T-cell (primary cell): ENCODE measurements at regions of chr5 and their contacts with region 1.

Region 1: GRCh38 chr5:32232441-32233219 is 58.5 kb upstream of the GOLPH3 start:
- DNase-seq: peak; percentile 40 to 85 (median 71)
- ATAC-seq: peak; percentile 74 to 88 (median 84)
- H3K4me3 ChIP-seq: no peak overlapping the region
- H3K4me3 Mint-ChIP-seq: no peak overlapping the region
- H3K27ac ChIP-seq: peak overlapping the region; percentile 25
- H3K27ac Mint-ChIP-seq: peak overlapping the region in 1 of 2 donors; percentile 41
- H3K4me1 ChIP-seq: peaks cover 0 to 8% of the 10 kb centered on the region in 2 experiments
- H3K4me1 Mint-ChIP-seq: peaks cover 4 to 7% (median 5%) of the 10 kb centered on the region in 3 donors
- H3K27me3 ChIP-seq: no peaks in the 10 kb centered on the region
- H3K27me3 Mint-ChIP-seq: no peaks in the 10 kb centered on the region

Region 2: DNA sequence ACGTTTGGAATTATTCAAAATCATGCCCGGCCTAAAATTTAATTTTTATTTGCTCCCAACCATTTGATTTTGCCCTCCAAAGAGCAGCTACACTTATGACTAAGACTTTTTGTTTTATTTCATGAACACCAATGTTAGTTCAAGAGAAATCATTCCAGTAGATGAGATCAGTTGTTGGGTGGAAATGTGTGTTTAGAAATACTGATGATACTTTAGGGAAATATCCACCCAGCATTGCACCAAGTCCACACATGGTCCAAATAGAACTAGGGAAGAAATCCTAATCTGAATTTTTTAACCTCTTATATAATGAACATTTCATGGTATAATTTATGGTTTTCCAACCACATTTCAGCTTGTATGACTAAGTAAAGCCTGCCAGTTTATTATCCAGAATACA is 30.2 kb before region 1 on chr5:
- CTCF ChIA-PET with region 1: no interaction called
- POLR2A ChIA-PET with region 1: no interaction called
- DNase-seq: no peak
- ATAC-seq: no peak
- H3K4me3 ChIP-seq: no peak overlapping the region
- H3K4me3 Mint-ChIP-seq: no peak overlapping the region
- H3K27ac ChIP-seq: no peak overlapping the region
- H3K27ac Mint-ChIP-seq: no peak overlapping the region
- H3K4me1 ChIP-seq: no peaks in the 10 kb centered on the region
- H3K4me1 Mint-ChIP-seq: no peaks in the 10 kb centered on the region
- H3K27me3 ChIP-seq: peaks cover 0 to 4% of the 10 kb centered on the region in 2 experiments
- H3K27me3 Mint-ChIP-seq: peaks cover 0 to 22% of the 10 kb centered on the region in 2 donors

Region 3: DNA sequence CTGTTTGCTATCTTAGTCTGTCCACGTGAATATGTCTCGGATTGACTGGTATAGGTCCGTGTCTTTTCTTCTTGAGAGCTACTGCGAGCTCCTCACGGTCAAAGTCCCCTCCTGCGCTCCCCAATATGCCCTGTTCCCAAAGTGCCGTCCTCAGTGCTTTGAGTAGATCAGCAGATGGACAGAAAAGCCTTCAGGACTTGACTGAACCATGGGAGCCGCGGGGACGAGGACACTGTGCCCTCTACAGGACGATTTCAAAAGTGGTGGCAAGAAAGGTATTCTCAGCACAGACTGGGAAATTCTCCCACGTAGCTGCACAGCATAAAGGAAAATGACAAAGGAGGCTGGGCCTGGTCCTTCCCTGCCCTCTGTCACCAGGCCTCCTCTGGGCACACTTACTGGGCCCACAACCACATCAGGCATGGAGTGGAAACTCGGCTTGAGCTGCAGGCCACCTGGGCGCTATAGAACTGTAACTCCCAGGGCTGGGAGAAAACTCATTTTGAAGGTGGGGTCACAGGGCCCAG is 96.7 kb after region 1 on chr5:
- CTCF ChIA-PET with region 1: interaction called, 48 to 66 read pairs
- POLR2A ChIA-PET with region 1: no interaction called
- DNase-seq: peak in 30 of 35 experiments; percentile 12 to 74 (median 35)
- ATAC-seq: peak; percentile 73 to 82 (median 76)
- H3K4me3 ChIP-seq: no peak overlapping the region
- H3K4me3 Mint-ChIP-seq: no peak overlapping the region
- H3K27ac ChIP-seq: no peak overlapping the region
- H3K27ac Mint-ChIP-seq: no peak overlapping the region
- H3K4me1 ChIP-seq: peaks cover 0 to 5% of the 10 kb centered on the region in 2 experiments
- H3K4me1 Mint-ChIP-seq: peaks cover 2 to 5% (median 2%) of the 10 kb centered on the region in 3 donors
- H3K27me3 ChIP-seq: no peaks in the 10 kb centered on the region
- H3K27me3 Mint-ChIP-seq: no peaks in the 10 kb centered on the region

Region 4: DNA sequence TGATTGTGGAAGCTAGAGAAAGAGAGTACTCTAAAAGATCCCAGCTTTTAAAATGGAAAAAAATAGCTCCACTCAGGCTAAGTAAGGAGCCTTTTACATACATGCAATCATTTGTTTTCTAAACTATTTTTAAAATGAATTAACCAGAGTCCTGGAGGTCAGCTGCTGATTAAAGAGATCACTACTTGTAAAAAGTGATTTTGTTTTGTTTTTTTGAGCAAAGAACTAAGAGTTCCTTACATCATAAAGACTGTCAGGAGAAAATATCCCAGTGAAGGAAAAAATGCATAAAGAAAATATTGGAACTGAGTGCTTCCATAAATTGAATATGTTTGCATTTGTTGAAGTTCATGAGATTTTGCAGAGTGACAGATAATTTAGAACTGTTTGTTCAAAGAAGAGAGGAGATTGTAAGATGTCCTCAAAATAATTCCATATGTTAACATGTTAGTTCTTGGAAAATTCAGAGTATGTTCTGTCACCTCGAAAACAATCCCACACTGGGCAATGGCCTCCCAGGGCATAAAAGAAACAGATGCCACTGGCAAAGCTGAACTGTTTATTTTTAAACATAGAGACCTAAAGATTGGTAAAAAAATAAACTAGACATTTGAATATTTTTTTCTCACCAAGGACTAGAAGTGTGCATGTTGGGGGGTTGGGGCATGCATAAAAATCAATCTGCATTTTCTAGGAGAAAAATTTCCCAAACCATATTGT is 743.2 kb after region 1 on chr5:
- CTCF ChIA-PET with region 1: no interaction called
- POLR2A ChIA-PET with region 1: no interaction called
- DNase-seq: no peak
- ATAC-seq: no peak
- H3K4me3 ChIP-seq: no peak overlapping the region
- H3K4me3 Mint-ChIP-seq: no peak overlapping the region
- H3K27ac ChIP-seq: no peak overlapping the region
- H3K27ac Mint-ChIP-seq: no peak overlapping the region
- H3K4me1 ChIP-seq: no peaks in the 10 kb centered on the region
- H3K4me1 Mint-ChIP-seq: no peaks in the 10 kb centered on the region
- H3K27me3 ChIP-seq: no peaks in the 10 kb centered on the region
- H3K27me3 Mint-ChIP-seq: no peaks in the 10 kb centered on the region